ENCODE measurements at regions of chr6 and their contacts with region 1.

Region 1: DNA sequence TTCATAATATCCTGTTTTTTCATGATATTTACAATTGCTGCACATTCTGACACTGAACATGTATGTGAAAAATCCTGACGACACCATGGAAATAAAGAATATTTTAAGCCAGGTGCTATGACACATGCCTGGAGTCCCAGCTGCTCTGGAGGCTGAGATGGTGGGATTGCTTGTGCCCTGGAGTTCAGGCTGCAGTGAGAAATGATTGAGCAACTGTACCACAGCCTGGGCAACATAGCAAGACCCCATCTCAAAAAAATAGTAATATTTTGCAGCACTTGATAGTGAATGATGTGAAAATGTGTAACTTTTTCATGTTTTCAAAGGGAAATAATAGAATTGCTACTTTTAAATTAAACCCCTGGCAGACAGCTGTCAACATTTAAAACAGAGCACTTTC is 137.1 kb downstream of the ADGRG6 start:
- DNase-seq: no peak
- H3K4me3 ChIP-seq: no peak overlapping the region
- H3K27ac ChIP-seq: no peak overlapping the region
- H3K4me1 ChIP-seq: no peaks in the 10 kb centered on the region
- H3K27me3 ChIP-seq: no peaks in the 10 kb centered on the region
- CTCF ChIP-seq: no peak
- EP300 ChIP-seq: no peak
- POLR2A ChIP-seq: no peak

Region 2: GRCh38 chr6:142030115-142030619 is 408.7 kb before region 1 on chr6:
- in situ Hi-C with region 1: no loop called
- intact Hi-C with region 1: no loop called
- DNase-seq: no peak
- H3K4me3 ChIP-seq: no peak overlapping the region
- H3K27ac ChIP-seq: no peak overlapping the region
- H3K4me1 ChIP-seq: no peaks in the 10 kb centered on the region
- H3K27me3 ChIP-seq: no peaks in the 10 kb centered on the region
- CTCF ChIP-seq: no peak
- EP300 ChIP-seq: no peak
- POLR2A ChIP-seq: no peak

Region 3: DNA sequence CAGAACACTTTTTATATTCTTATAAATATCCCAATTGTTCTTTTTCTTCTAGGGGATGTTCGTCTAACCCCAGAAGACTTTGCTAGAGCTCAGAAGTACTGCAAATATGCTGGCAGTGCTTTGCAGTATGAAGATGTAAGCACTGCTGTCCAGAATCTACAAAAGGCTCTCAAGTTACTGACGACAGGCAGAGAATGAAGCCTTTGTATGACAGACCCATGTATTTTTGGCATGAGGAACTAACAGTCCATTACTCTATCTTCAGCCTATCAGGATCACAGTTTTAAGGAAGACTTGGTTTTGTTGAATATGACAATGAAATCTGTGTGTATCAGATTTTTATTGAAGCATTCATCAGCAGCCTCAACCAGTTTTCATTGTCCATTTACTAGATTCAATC is 220.5 kb before region 1 on chr6:
- in situ Hi-C with region 1: no loop called
- intact Hi-C with region 1: no loop called
- DNase-seq: no peak
- H3K4me3 ChIP-seq: no peak overlapping the region
- H3K27ac ChIP-seq: no peak overlapping the region
- H3K4me1 ChIP-seq: no peaks in the 10 kb centered on the region
- H3K27me3 ChIP-seq: no peaks in the 10 kb centered on the region
- CTCF ChIP-seq: no peak
- EP300 ChIP-seq: no peak
- POLR2A ChIP-seq: no peak

Region 4: GRCh38 chr6:142420802-142421201 is 18.1 kb before region 1 on chr6:
- in situ Hi-C with region 1: no loop called
- intact Hi-C with region 1: loop called (anchors 1 kb)
- DNase-seq: no peak
- H3K4me3 ChIP-seq: no peak overlapping the region
- H3K27ac ChIP-seq: no peak overlapping the region
- H3K4me1 ChIP-seq: no peaks in the 10 kb centered on the region
- H3K27me3 ChIP-seq: no peaks in the 10 kb centered on the region
- CTCF ChIP-seq: no peak
- EP300 ChIP-seq: no peak
- POLR2A ChIP-seq: no peak

Region 5: DNA sequence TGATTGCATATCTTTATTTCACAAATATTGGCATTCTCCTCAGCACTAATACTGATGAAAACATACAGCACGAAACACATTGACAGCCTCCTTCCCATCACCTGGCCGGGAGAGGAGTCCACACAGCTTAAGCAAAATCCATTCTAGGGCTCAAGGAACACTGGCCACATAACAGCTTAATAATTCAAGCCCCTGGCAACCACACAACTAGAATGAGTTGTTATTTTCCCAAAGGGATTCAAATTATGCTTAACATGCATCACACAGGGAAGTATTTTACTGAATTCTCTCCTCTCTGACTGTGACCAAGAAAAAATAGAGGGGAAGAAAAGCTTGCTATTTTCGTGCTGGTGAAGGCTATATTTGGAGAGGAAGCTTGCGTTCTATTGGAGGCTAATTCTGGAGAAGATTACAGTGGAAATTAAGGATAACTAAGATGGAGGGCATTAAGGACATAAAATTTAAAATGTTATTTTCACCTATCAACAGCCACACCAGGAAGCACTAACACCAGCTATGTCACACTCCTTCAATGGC is 61.4 kb after region 1 on chr6:
- in situ Hi-C with region 1: no loop called
- intact Hi-C with region 1: no loop called
- DNase-seq: no peak
- H3K4me3 ChIP-seq: no peak overlapping the region
- H3K27ac ChIP-seq: no peak overlapping the region
- H3K4me1 ChIP-seq: no peaks in the 10 kb centered on the region
- H3K27me3 ChIP-seq: no peaks in the 10 kb centered on the region
- CTCF ChIP-seq: no peak
- EP300 ChIP-seq: no peak
- POLR2A ChIP-seq: no peak